A673 (cell line): ENCODE measurements at regions of chr15 and their contacts with region 1.

Region 1: DNA sequence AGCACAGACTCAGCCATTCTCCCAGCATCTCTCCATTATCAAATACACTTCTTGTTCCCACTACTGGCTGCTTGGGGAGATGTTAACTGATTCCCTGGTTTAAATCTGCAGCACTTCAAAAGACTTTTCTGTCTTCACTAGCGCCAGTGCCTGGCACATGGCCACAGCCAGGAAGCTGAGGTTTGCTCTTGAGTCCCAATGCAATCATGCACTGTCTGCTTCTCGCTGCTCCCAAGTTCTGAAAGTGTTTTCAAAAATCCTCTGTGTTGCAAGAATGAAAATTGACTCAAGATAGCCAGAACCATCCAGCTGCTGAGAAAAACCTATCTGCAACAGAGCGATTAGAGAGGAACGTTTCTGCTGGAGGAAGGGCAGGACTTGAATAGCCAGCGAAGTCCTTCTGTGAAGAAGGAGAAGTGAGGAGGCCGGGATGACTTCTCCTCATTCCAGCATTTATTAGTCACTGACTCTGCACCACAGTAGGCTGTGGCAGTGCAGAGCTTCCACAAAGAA is 358.4 kb upstream of the NR2F2 start:
- DNase-seq: no peak
- H3K4me3 ChIP-seq: no peak overlapping the region
- H3K27ac ChIP-seq: no peak overlapping the region
- H3K4me1 ChIP-seq: no peaks in the 10 kb centered on the region
- H3K27me3 ChIP-seq: no peaks in the 10 kb centered on the region
- CTCF ChIP-seq: no peak

Region 2: GRCh38 chr15:96037584-96037983 is 65.5 kb after region 1 on chr15:
- CTCF ChIA-PET with region 1: no interaction called
- POLR2A ChIA-PET with region 1: no interaction called
- intact Hi-C with region 1: loop called (anchors 10 kb)
- DNase-seq: peak; percentile 9
- H3K4me3 ChIP-seq: no peak overlapping the region
- H3K27ac ChIP-seq: no peak overlapping the region
- H3K4me1 ChIP-seq: peaks cover 11% of the 10 kb centered on the region
- H3K27me3 ChIP-seq: no peaks in the 10 kb centered on the region
- CTCF ChIP-seq: no peak